Panc1 (cell line): ENCODE measurements at regions of chr11 and their contacts with region 1.

Region 1: DNA sequence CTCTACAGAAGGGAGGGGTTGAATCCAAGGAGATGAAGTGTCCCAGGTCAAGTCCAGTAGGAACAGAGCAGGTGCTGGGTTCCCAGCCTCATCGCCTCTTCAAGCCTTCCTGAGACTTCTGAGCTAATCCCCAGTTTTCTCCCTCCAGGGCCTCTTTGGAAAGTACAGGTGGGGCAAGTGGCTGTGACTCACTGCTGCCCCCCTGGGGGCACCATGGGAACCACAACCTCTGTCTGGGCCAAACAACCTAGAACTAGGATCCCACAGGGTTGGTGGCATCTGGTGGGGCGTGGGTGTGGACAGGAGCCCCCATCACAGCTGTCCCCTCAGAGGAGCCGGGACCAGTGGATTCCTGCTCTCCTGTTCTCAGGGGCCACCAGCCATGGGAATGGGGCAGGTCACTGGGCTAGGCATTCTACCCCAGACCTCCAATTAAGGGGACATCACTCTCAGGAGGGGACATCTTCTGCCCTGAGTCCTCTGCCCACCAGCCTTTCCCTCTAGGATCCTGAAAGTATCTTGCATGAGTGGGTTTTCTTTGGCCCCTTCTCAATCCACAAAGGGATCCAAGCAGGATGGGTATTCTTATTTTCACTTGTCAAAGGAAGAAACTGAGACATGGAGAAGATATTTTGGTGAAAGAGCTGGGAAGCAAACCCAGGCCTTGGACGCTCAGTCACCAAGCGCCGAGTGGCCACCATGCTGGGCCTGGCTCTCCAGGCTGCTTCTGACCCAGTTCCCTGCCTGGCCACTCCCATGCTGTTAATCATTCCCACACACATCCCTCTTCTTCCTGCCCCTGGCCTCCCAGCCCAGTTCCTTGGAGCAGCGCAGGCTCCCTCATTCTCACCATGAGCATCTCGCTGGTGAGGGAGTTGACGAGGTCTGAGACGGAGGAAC is 23.8 kb downstream of the LRRC10B start:
- DNase-seq: peak; percentile 33
- ATAC-seq: peak; percentile 73
- H3K4me3 ChIP-seq: no peak overlapping the region
- H3K27ac ChIP-seq: no peak overlapping the region
- H3K4me1 ChIP-seq: no peaks in the 10 kb centered on the region
- H3K27me3 ChIP-seq: no peaks in the 10 kb centered on the region
- CTCF ChIP-seq: peak; percentile 96

Region 2: DNA sequence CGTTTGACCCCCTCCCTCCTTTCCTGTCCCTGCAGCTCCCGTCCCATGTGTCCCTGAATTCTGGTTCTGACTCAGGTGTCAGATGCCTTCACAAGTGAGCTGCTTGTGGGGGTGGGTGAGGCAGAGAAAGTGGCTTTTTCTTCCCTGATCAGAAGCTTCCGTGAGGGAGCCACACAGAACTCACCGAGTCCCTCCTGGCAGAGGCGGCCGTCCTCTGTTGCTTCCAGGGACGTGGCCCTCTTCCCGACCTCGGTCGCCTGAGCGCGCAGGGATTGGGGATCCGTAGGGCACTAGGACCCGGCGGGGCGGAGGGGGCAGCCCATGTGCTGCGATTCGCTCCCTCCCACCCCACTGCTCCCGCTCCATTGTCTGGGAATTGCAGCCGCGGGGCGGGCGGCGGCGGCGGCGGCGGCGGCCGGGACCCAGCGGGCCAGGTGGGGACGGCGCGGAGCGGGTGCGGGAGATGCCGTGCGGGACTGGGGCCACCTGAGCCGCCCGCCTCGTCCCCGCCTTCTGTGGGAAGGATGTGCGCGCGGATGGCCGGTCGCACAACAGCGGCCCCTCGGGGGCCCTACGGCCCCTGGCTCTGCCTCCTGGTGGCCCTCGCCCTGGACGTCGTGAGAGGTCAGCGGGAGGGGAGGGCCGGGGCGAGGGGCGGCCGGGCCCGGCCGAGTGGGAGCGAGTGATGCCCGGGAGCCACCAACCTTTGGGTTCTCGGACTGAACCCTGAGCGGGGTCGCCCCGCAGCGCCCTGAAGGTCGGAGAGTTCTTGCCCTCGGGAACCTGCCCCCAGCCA is 608.1 kb before region 1 on chr11 and contains the start of gene TMEM132A:
- CTCF ChIA-PET with region 1: no interaction called
- POLR2A ChIA-PET with region 1: no interaction called
- in situ Hi-C with region 1: no loop called
- intact Hi-C with region 1: no loop called
- DNase-seq: no peak
- ATAC-seq: peak; percentile 95
- H3K4me3 ChIP-seq: peak within 1 kb of the TSS; percentile 67 to 75
- H3K27ac ChIP-seq: peak within 1 kb of the TSS; percentile 77
- H3K4me1 ChIP-seq: peaks cover 18% of the 10 kb centered on the region
- H3K27me3 ChIP-seq: no peaks in the 10 kb centered on the region
- CTCF ChIP-seq: no peak; the same call in 1 of the 2 replicates
- total RNA-seq, gene TMEM132A: 154 TPM

Region 3: DNA sequence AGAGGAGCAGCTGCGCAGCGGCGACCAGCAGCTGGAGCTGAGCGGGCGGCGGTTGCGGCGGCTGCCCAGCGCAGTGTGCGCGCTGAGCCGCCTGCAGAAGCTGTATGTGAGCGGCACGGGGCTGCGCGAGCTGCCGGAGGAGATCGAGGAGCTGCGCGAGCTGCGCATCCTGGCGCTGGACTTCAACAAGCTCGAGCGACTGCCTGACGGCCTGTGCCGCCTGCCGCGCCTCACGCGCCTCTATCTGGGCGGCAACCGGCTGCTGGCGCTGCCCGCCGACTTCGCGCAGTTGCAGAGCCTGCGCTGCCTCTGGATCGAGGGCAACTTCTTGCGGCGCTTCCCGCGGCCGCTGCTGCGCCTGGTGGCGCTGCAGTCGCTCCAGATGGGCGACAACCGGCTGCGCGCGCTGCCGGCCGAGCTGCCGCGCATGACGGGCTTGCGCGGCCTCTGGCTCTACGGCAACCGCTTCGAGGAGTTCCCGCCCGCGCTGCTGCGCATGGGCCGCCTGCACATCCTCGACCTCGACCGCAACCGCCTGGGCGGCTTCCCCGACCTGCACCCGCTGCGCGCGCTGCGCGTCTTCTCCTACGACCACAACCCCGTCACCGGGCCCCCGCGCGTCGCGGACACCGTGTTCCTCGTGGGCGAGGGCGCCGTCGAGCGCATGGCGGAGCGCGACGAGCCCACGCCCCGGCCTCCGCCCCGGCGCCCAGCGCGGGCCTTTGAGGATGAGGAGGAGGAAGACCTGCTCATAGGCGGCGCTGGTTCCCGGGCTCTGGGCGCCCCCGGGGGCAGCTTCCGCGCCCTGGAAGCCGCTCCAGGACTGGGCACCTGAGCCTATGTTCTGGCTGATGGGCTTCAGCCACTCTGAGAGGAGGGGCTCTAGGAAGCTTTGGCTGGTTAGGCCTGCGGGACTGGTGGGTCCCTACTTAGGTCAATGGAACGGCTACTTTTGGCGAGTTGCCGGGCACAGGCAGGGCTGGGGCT is 23.1 kb before region 1 on chr11:
- CTCF ChIA-PET with region 1: no interaction called
- POLR2A ChIA-PET with region 1: no interaction called
- in situ Hi-C with region 1: no loop called
- intact Hi-C with region 1: no loop called
- DNase-seq: no peak
- ATAC-seq: peak; percentile 93
- H3K4me3 ChIP-seq: no peak overlapping the region
- H3K27ac ChIP-seq: no peak overlapping the region
- H3K4me1 ChIP-seq: no peaks in the 10 kb centered on the region
- H3K27me3 ChIP-seq: peaks cover 4% of the 10 kb centered on the region; the same call in 1 of the 2 replicates
- CTCF ChIP-seq: peak; percentile 85

Region 4: GRCh38 chr11:61581030-61581928 is 48.9 kb after region 1 on chr11 and contains the start of gene SYT7:
- CTCF ChIA-PET with region 1: interaction called, 12 read pairs
- POLR2A ChIA-PET with region 1: no interaction called
- in situ Hi-C with region 1: no loop called
- intact Hi-C with region 1: no loop called
- DNase-seq: peak; percentile 63
- ATAC-seq: peak; percentile 91
- H3K4me3 ChIP-seq: peak within 1 kb of the TSS; percentile 41 to 47
- H3K27ac ChIP-seq: no peak within 1 kb of the TSS
- H3K4me1 ChIP-seq: no peaks in the 10 kb centered on the region
- H3K27me3 ChIP-seq: peaks cover 6% of the 10 kb centered on the region; the same call in 1 of the 2 replicates
- CTCF ChIP-seq: peak; percentile 75
- total RNA-seq, gene SYT7: 2.5 TPM

Region 5: GRCh38 chr11:61602775-61603569 is 70.6 kb after region 1 on chr11:
- CTCF ChIA-PET with region 1: no interaction called
- POLR2A ChIA-PET with region 1: no interaction called
- in situ Hi-C with region 1: no loop called
- intact Hi-C with region 1: no loop called
- DNase-seq: no peak
- ATAC-seq: peak; percentile 32
- H3K4me3 ChIP-seq: no peak overlapping the region
- H3K27ac ChIP-seq: no peak overlapping the region
- H3K4me1 ChIP-seq: peaks cover 3% of the 10 kb centered on the region; the same call in 1 of the 2 replicates
- H3K27me3 ChIP-seq: no peaks in the 10 kb centered on the region; the same call in 1 of the 2 replicates
- CTCF ChIP-seq: no peak

Region 6: DNA sequence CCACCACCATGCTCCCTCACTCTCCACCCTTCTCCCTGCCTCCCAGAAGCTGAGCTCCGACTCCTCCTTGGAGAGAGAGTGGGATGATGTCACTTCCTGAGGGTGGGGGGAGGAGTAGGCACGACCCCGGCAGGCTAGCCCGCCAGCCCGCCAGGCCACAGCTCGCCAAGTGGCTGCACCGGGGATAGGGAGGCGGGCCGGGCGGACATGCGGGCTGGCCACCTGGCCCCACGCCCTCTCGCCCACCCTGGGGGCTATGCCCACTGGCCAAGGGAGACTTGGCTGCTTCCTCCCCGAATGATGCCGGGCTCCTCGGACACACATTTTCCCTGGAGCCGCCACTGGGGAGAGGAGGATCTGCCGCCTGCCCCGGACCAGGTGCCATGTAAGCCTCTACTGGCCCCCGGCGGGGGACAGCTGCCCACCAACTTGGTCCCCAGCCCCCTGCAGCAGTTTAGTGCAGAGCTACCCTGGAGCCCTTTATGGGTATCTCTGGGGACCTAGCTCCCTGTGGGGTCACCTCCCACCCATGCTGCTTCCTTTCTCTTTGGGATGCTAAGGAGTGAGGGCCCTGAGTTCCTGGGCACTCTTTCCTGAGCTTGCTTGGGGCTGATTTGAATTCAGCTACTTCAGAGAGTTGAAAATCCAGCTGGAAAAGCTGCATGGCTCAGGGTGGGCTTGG is 186.4 kb after region 1 on chr11:
- CTCF ChIA-PET with region 1: no interaction called
- POLR2A ChIA-PET with region 1: no interaction called
- in situ Hi-C with region 1: no loop called
- intact Hi-C with region 1: no loop called
- DNase-seq: no peak
- ATAC-seq: no peak; the same call in 1 of the 2 replicates
- H3K4me3 ChIP-seq: peak overlapping the region in 1 of 2 experiments; percentile 24; a peak in 1 of 4 replicates
- H3K27ac ChIP-seq: no peak overlapping the region
- H3K4me1 ChIP-seq: 0 out of 2 replicates have a peak, but pooled peaks cover 7% of the 10 kb centered on the region
- H3K27me3 ChIP-seq: no peaks in the 10 kb centered on the region
- CTCF ChIP-seq: no peak

Region 7: GRCh38 chr11:61733120-61733978 is 201.0 kb after region 1 on chr11:
- CTCF ChIA-PET with region 1: interaction called, 19 read pairs
- POLR2A ChIA-PET with region 1: no interaction called
- in situ Hi-C with region 1: no loop called
- intact Hi-C with region 1: no loop called
- DNase-seq: peak; percentile 55
- ATAC-seq: peak; percentile 76
- H3K4me3 ChIP-seq: no peak overlapping the region
- H3K27ac ChIP-seq: no peak overlapping the region
- H3K4me1 ChIP-seq: peaks cover 21% of the 10 kb centered on the region
- H3K27me3 ChIP-seq: no peaks in the 10 kb centered on the region
- CTCF ChIP-seq: peak; percentile 99